Esophagus muscularis mucosa (tissue), 4 donors: ENCODE measurements at regions of chr9 and their contacts with region 1.

Region 1: DNA sequence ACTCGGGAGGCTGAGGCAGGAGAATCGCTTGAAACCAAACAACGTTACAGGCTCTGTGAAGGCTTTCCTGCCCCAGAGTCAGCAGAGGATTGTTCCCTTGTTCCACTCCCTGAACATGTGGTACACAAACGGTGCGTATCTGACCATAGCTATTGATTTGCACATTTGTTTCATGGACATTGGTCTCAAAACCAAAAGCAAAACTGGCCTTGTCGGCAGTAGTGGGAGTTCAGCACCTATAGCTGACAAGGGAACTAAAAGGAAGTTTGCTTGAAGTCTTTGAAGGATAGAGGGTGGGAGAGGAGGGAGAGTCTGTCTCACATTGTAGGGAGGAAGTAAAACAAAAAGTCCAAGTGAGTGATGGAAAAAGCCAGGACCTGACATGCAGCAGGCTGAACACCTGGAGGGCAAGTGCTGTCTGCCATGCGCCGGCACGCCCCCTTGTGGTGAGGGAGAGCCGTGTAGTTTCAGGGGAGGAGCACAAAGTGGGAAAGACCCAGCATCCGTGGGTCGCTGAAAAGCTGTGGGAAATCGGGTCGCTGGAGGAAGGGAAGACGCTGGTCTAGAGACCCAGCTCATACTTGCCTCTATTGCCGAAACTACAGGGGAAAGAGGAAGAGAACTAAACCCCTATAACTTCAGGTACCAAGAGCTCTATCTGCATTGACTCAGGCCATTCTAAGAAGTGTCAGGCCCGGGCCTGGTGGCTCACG is 58.0 kb downstream of the RAD23B start:
- DNase-seq: peak; percentile 94
- H3K4me3 ChIP-seq: no peak overlapping the region
- H3K27ac ChIP-seq: no peak overlapping the region
- H3K4me1 ChIP-seq: peaks cover 18 to 24% (median 19%) of the 10 kb centered on the region in 4 donors
- H3K27me3 ChIP-seq: no peaks in the 10 kb centered on the region
- CTCF ChIP-seq: peak; percentile 73 to 90 (median 86)
- EP300 ChIP-seq: no peak
- POLR2A ChIP-seq: no peak

Region 2: GRCh38 chr9:107239474-107239873 is 101.6 kb before region 1 on chr9:
- intact Hi-C with region 1: loop called (anchors 2 kb)
- DNase-seq: no peak
- H3K4me3 ChIP-seq: no peak overlapping the region
- H3K27ac ChIP-seq: no peak overlapping the region
- H3K4me1 ChIP-seq: no peaks in the 10 kb centered on the region
- H3K27me3 ChIP-seq: no peaks in the 10 kb centered on the region
- CTCF ChIP-seq: peak; percentile 34 to 53 (median 40)
- EP300 ChIP-seq: no peak
- POLR2A ChIP-seq: no peak

Region 3: GRCh38 chr9:107286044-107286443 is 55.0 kb before region 1 on chr9:
- intact Hi-C with region 1: loop called (anchors 5 kb)
- DNase-seq: no peak
- H3K4me3 ChIP-seq: peak overlapping the region; percentile 91 to 99 (median 98)
- H3K27ac ChIP-seq: peak overlapping the region in 3 of 4 donors; percentile 99 to 100 (median 99)
- H3K4me1 ChIP-seq: peaks cover 52 to 73% (median 70%) of the 10 kb centered on the region in 4 donors
- H3K27me3 ChIP-seq: no peaks in the 10 kb centered on the region
- CTCF ChIP-seq: no peak
- EP300 ChIP-seq: no peak
- POLR2A ChIP-seq: no peak

Region 4: DNA sequence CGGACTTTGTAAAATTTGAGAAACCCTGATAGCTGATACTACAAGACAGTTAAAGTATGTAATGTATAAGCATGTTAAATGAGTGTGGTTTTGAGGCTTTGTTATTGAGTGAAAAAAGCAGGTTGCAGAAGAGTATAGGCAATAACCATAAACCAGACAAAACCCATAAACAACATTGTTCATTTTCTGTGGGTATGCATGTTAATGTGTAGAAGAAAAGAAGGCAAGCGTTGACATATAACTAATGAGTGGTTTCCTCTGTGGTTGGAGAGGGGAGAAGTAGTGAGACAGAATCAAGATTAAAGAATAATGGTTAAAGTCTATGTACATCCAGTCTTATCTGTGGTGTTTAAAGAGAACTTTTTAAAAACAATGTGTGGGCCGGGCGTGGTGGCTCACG is 31.8 kb before region 1 on chr9:
- intact Hi-C with region 1: loop called (anchors 5 kb)
- DNase-seq: no peak
- H3K4me3 ChIP-seq: no peak overlapping the region
- H3K27ac ChIP-seq: no peak overlapping the region
- H3K4me1 ChIP-seq: peaks cover 0 to 13% (median 6%) of the 10 kb centered on the region in 4 donors
- H3K27me3 ChIP-seq: no peaks in the 10 kb centered on the region
- CTCF ChIP-seq: no peak
- EP300 ChIP-seq: no peak
- POLR2A ChIP-seq: no peak

Region 5: DNA sequence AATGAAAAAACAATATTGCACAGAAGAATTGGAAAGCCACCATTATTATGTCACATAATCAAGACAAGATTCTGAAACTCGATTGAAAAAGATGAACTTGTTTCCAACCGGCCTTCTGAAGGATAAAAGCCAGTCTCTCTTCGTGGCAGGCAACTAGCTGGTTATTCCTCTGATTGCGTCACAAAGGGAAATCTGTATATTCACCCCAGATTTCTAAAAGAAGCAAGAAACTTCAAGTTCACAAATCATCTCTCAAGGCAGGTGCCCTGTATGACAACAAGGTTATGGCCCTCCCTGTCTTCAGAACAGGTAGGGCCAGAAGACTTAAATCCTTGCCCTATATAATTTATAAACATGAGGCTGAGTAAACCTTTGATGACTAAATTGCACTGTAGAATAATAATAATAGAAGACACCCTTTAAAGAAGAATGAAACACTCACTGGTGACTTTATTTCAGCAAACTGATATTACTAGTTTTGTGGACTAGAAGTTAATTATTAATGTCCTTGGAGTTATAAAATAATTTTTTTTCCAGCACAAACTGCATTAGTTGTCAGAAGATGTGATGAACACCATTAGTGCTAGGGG is 151.4 kb after region 1 on chr9:
- intact Hi-C with region 1: no loop called
- DNase-seq: no peak
- H3K4me3 ChIP-seq: no peak overlapping the region
- H3K27ac ChIP-seq: peak overlapping the region; percentile 94 to 96 (median 95)
- H3K4me1 ChIP-seq: peaks cover 21 to 29% (median 28%) of the 10 kb centered on the region in 4 donors
- H3K27me3 ChIP-seq: no peaks in the 10 kb centered on the region
- CTCF ChIP-seq: no peak
- EP300 ChIP-seq: no peak
- POLR2A ChIP-seq: no peak